Left cardiac atrium (tissue), 4 donors: ENCODE measurements at regions of chr5 and their contacts with region 1.

Region 1: GRCh38 chr5:35926389-35927051 is 11.9 kb downstream of the CAPSL start:
- DNase-seq: no peak
- ATAC-seq: peak; percentile 76 to 78

Region 2: DNA sequence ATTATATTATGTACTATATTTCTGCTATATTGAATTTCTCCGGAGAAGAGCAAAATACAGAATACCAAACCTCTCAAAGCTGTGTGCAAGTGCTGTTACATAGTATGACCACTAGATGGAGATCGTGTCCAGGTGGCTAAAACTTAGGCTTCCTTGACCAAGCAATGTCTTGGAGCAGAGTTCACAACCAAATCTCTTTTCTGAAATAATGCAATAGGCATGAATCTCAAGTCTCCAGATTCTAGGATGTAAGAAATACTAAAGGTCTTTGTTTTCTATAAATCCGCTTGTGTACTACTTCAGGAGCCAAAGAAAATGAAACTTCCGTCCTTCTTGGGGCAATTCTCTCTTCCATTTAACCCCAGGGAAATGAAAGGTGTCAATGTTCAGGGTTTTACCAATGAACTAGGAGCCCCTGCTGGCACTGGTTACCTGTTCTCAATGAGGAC is 1451.9 kb before region 1 on chr5:
- intact Hi-C with region 1: loop called in 1 of 2 experiments (anchors 10 kb)
- DNase-seq: no peak
- ATAC-seq: peak; percentile 68 to 71

Region 3: DNA sequence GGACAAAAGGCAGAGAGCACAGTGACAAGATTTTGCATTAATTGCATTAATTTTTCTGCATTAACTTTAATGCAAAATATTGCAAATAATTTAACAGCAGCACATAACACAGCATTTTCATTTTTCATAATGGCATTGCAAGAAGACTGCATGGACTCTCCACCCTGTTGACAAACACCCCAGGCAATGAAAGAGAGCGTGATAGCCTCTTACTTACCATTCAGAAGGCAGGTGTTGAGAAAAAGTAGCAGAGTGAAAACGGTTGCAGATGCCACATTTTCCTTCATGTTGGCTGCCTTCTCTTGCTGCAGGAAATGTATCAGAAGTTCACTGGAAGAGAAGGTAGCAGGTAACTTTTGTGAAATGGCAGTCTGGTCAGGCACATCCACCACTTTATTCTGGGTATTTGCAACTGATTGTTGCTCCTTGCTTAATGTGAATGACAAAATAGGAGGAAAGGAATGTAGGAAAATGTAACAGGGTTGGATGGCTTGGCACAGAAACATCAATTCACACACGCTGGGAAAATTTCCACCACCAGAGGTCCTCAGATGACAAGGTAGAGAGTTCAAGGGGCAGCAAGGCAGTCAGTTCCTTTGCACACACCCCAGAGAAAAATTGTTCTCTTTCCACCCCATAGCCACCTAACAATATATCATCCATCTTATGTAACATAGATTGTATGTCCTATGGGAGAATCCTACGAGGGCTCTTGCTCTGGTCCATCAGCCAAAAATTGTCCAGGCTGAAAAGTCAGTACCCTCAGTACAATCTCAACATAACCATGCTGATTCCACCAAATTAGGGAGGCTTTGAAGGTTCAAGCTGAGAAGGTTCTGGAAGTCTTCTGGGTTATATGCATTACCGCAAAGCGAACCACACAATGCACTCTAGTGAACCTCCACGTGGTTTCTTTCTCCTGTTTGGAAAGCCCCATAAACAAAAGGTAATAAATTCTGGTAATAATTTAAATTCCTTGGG is 836.9 kb before region 1 on chr5:
- intact Hi-C with region 1: loop called in 1 of 2 experiments (anchors 10 kb)
- DNase-seq: no peak
- ATAC-seq: peak; percentile 67 to 80

Region 4: GRCh38 chr5:35617435-35618303 is 308.9 kb before region 1 on chr5 and contains the start of gene SPEF2:
- intact Hi-C with region 1: loop called (anchors 5 to 10 kb)
- DNase-seq: peak; percentile 86
- ATAC-seq: peak; percentile 99 to 100
- total RNA-seq, gene SPEF2: 2.6 to 2.8 TPM

Region 5: DNA sequence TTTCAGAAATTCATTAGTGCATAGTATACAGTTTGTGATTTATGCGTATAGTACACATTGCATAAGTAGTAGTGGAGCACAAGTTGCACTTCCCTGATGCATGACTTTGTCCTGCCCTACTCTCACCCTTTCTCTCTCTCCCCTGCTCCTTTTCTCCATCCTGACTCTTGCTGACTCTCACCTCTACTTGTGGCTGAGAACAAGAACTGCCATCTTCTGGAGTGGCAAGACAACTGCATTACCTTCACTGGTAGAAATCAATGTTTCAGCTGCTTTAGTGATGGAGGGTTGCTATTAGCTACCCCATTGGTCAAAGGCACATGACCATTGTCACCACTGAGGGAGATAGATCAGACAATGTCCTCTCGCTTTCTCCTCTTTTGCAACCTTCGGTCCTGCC is 282.0 kb before region 1 on chr5:
- intact Hi-C with region 1: loop called in 1 of 2 experiments (anchors 10 kb)
- DNase-seq: no peak
- ATAC-seq: no peak

Region 6: DNA sequence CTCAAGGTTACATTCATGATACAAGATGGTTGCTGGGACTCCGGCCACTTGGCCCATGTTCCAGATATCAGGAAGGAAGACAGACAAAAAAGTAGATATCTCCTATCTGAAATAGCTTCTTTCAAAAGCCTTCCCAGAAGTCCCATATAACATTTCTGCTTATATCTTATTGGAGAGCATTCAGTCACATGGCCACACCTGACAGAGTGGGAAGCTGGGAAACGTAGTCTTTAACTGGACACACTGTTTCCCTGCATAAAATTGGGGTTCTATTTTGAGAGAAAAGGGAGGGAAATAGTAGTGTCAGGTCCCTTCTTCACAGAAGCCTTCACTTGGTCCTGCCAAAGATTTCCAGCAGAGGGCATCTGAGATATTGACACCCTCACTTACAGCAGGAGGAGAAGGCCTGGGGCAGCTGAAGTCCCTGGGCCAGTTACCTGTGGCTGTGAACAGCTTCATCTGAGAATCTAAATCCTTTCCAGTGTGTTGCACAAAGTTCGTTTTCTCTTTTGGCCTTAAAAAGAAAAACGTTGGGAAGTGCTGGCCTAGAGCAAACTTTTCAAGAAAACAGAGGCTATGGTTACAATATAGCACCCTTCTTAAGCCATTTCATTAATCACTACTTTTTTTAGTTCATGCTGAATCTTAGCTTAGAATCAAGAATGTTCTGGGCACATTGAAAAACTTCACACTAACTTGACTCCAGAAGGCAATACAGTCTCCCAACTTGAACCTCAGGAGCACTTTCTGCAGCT is 275.3 kb before region 1 on chr5:
- intact Hi-C with region 1: loop called (anchors 10 kb)
- DNase-seq: no peak
- ATAC-seq: no peak

Region 7: GRCh38 chr5:35777358-35778087 is 149.0 kb before region 1 on chr5:
- intact Hi-C with region 1: loop called (anchors 2 to 5 kb)
- DNase-seq: peak; percentile 69
- ATAC-seq: peak; percentile 34

Region 8: DNA sequence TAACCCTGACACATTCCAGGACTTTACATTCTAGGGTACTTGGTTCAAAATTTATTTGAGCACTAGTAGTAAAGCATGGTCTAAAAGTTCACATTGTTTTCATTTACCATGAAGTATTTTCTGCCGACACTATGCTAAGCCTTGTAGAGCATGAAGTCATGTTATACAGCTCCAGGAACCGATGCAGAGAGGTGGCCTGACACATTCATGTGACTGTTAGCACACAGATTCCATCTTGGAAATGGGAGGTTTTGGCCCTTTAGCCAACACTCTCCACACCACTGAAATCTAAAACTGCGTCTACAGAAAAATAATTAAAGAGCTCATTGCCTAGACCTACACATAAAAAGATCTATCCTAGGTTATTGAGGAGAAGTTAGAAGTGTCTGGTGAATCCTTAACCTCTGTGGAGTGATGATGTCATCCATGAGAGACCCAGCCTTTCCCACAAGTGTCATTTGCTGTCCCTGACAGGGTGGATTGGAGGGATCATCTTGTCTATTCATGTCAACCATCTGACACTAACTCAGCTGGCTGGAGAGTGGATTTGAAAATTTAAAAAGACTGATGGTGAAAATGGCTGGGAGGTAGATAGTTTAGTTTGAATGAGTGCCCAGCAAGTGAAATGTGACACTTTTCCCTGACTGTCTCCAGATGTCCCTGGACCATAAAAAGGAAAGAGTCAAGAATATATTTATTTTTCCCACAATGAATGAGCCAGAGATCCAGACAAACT is 373.8 kb after region 1 on chr5:
- intact Hi-C with region 1: no loop called
- DNase-seq: no peak
- ATAC-seq: peak in 1 of 2 donors; percentile 45